Activated T-helper 1 cell treated with anti-CD3 and anti-CD28 coated beads, Interleukin-12 subunit alpha, Interleukin-12 subunit beta, Interleukin-2, Interleukin-4 antibody, amounts not matched to agents 30 ng/mL and 10 ng/mL and 1 ng/mL, durations not matched to agents 14 hours and 24 hours and 36 hours (primary cell): ENCODE measurements at regions of chr5 and their contacts with region 1.

Region 1: GRCh38 chr5:79990598-79991507 is at the start of gene MTX3:
- DNase-seq: peak; percentile 81
- H3K4me3 Mint-ChIP-seq: peak within 1 kb of the TSS; percentile 93
- H3K27ac Mint-ChIP-seq: peak within 1 kb of the TSS; percentile 99
- H3K4me1 Mint-ChIP-seq: peaks cover 54% of the 10 kb centered on the region
- H3K27me3 Mint-ChIP-seq: no peaks in the 10 kb centered on the region
- total RNA-seq, gene MTX3: 31.4 and 32.5 TPM in 2 replicates

Region 2: DNA sequence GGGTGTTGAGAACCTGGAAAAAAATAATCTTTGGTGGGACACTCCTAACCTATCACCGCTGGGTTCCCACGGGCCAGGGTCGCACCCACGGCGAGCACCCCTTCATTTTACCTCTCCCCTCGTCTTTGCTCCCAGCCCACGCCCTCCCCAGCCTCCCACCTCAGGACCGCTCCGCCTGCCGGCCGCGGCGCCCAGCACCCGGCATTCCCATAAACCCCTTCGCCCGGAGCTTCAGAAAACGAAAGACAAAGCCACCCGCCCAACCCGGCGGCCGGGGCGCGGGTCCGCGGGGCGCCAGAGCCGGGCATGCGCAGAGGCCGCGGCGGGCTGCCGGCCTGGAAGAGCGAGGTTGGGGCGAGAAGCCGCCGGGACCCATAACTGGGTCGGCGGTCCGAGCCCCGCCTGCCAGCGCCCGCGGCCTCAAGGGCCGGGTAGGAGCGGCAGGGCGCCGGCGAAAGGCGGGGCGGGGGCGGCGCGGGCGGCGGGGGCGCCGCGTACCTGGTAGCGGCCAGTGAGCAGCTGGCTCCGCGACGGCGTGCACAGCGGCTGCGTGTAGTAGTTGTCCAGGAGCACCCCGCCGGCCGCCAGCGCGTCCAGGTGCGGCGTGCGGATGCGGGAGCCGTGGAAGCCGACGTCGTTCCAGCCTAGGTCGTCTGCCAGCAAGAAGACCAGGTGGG is 1006.3 kb before region 1 on chr5:
- intact Hi-C with region 1: loop called (anchors 10 kb)
- DNase-seq: peak; percentile 81
- H3K4me3 Mint-ChIP-seq: peak overlapping the region; percentile 85
- H3K27ac Mint-ChIP-seq: peak overlapping the region; percentile 90
- H3K4me1 Mint-ChIP-seq: peaks cover 44% of the 10 kb centered on the region
- H3K27me3 Mint-ChIP-seq: peaks cover 8% of the 10 kb centered on the region

Region 3: GRCh38 chr5:79560771-79561524 is 429.9 kb before region 1 on chr5:
- intact Hi-C with region 1: loop called (anchors 1 kb)
- DNase-seq: peak; percentile 8
- H3K4me3 Mint-ChIP-seq: peak overlapping the region; percentile 67
- H3K27ac Mint-ChIP-seq: peak overlapping the region; percentile 89
- H3K4me1 Mint-ChIP-seq: peaks cover 44% of the 10 kb centered on the region
- H3K27me3 Mint-ChIP-seq: no peaks in the 10 kb centered on the region

Region 4: GRCh38 chr5:79878721-79879336 is 112.0 kb before region 1 on chr5:
- intact Hi-C with region 1: loop called (anchors 5 kb)
- DNase-seq: peak; percentile 6
- H3K4me3 Mint-ChIP-seq: no peak overlapping the region
- H3K27ac Mint-ChIP-seq: no peak overlapping the region
- H3K4me1 Mint-ChIP-seq: no peaks in the 10 kb centered on the region
- H3K27me3 Mint-ChIP-seq: no peaks in the 10 kb centered on the region

Region 5: DNA sequence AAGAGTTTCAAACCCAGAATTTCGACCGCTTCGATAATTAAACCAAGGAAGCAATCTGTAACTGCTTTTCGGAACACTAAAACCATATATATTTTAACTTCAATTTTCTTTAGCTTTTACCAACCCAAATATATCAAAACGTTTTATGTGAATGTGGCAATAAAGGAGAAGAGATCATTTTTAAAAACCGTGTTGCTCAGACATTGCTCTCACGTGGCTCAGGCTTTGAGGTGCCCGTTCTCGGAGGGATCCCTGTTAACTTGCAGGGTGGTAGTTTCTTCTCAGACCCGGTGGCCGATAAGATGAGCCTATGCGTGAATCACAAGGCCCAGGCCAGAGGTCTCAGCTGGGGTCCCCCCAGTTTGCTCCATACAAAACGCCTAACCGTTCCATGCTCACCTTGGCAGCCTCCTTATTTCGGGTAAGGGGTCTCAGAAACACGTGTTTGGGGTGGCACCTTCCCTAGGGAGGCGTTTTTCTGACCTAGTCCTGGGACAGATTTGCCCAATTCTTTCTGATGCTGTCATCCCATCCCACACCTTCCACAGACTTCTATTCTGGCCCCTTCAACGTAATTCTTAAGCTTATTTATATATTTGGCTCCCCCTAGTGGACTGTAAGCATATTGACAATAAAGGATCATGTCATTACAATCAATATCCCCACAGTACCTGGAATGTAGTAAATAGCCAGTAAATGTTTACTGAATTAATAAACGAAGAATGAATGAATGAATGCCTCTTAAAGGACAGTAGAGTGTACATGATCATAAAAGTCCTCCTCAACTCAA is 92.4 kb after region 1 on chr5:
- intact Hi-C with region 1: loop called (anchors 1 kb)
- DNase-seq: no peak
- H3K4me3 Mint-ChIP-seq: peak overlapping the region; percentile 83
- H3K27ac Mint-ChIP-seq: peak overlapping the region; percentile 93
- H3K4me1 Mint-ChIP-seq: peaks cover 19% of the 10 kb centered on the region
- H3K27me3 Mint-ChIP-seq: peaks cover 4% of the 10 kb centered on the region

Region 6: GRCh38 chr5:80255732-80256479 is 265.1 kb after region 1 on chr5 and contains the start of gene SERINC5:
- intact Hi-C with region 1: loop called (anchors 2 kb)
- DNase-seq: peak; percentile 83
- H3K4me3 Mint-ChIP-seq: peak within 1 kb of the TSS; percentile 96
- H3K27ac Mint-ChIP-seq: peak within 1 kb of the TSS; percentile 99
- H3K4me1 Mint-ChIP-seq: peaks cover 51% of the 10 kb centered on the region
- H3K27me3 Mint-ChIP-seq: no peaks in the 10 kb centered on the region
- total RNA-seq, gene SERINC5: 21.2 and 22.8 TPM in 2 replicates

Region 7: GRCh38 chr5:81020478-81021174 is 1029.8 kb after region 1 on chr5:
- intact Hi-C with region 1: loop called (anchors 5 kb)
- DNase-seq: no peak
- H3K4me3 Mint-ChIP-seq: no peak overlapping the region
- H3K27ac Mint-ChIP-seq: no peak overlapping the region
- H3K4me1 Mint-ChIP-seq: peaks cover 61% of the 10 kb centered on the region
- H3K27me3 Mint-ChIP-seq: no peaks in the 10 kb centered on the region